ENCODE measurements at regions of chr3 and their contacts with region 1.

Region 1: GRCh38 chr3:99842826-99843589 is 25.3 kb downstream of the CMSS1 start:
- DNase-seq: no peak
- ATAC-seq: peak; percentile 79
- H3K4me3 Mint-ChIP-seq: no peak overlapping the region
- H3K27ac Mint-ChIP-seq: no peak overlapping the region
- H3K4me1 Mint-ChIP-seq: peaks cover 31% of the 10 kb centered on the region
- H3K27me3 Mint-ChIP-seq: no peaks in the 10 kb centered on the region
- CTCF ChIP-seq: 0 out of 2 replicates have a peak, but pooled peaks have one; percentile 36

Region 2: GRCh38 chr3:99862208-99862607 is 19.2 kb after region 1 on chr3:
- CTCF ChIA-PET with region 1: no interaction called
- POLR2A ChIA-PET with region 1: no interaction called
- DNase-seq: no peak
- ATAC-seq: no peak
- H3K4me3 Mint-ChIP-seq: no peak overlapping the region
- H3K27ac Mint-ChIP-seq: no peak overlapping the region
- H3K4me1 Mint-ChIP-seq: peaks cover 20% of the 10 kb centered on the region
- H3K27me3 Mint-ChIP-seq: peaks cover 16% of the 10 kb centered on the region
- CTCF ChIP-seq: no peak

Region 3: DNA sequence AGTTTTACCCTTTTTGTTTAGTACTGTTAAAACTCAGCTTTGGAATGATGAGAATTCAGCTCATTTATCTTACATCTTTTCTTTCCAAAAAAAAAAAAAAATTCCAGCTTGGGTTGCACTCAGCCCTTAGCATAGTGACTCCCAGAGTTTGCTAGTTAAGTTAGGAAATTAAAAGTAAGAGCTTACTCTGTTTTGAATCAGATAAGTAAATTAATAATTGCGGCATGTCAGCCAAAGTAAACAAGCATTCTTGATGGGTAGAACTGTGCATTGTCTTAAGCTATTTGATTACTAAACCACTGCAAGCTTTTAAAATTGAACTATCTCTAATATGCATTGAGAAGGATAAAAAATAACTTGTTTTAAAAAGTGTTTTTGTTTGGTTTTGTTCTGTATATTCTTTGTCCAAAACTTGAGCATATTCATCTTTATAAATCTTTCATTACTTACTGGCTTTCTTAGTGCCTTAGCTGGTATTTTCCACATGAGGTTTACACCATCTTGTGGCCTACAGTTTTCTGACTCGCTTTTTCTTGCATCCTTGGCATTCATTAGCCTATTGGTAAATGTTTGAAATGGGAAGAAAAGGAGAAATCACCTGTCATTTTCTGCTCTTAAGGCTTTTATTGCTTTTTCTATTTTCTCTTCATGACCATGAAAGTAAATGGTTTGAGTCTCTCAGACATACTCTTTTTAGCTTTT is 163.7 kb after region 1 on chr3:
- CTCF ChIA-PET with region 1: interaction called, 15 read pairs
- POLR2A ChIA-PET with region 1: no interaction called
- DNase-seq: no peak
- ATAC-seq: no peak
- H3K4me3 Mint-ChIP-seq: no peak overlapping the region; the same call in 1 of the 2 replicates
- H3K27ac Mint-ChIP-seq: no peak overlapping the region; the same call in 1 of the 2 replicates
- H3K4me1 Mint-ChIP-seq: peaks cover 46% of the 10 kb centered on the region
- H3K27me3 Mint-ChIP-seq: no peaks in the 10 kb centered on the region
- CTCF ChIP-seq: no peak

Region 4: GRCh38 chr3:100089812-100090668 is 247.0 kb after region 1 on chr3:
- CTCF ChIA-PET with region 1: interaction called, 20 read pairs
- POLR2A ChIA-PET with region 1: no interaction called
- DNase-seq: peak; percentile 43
- ATAC-seq: peak; percentile 95
- H3K4me3 Mint-ChIP-seq: no peak overlapping the region
- H3K27ac Mint-ChIP-seq: peak overlapping the region; percentile 36
- H3K4me1 Mint-ChIP-seq: peaks cover 45% of the 10 kb centered on the region
- H3K27me3 Mint-ChIP-seq: no peaks in the 10 kb centered on the region
- CTCF ChIP-seq: no peak; the same call in 1 of the 2 replicates

Region 5: GRCh38 chr3:100260685-100261484 is 417.9 kb after region 1 on chr3 and contains the start of gene TBC1D23:
- CTCF ChIA-PET with region 1: interaction called, 13 read pairs
- POLR2A ChIA-PET with region 1: no interaction called
- DNase-seq: peak; percentile 98
- ATAC-seq: peak; percentile 99
- H3K4me3 Mint-ChIP-seq: peak within 1 kb of the TSS; percentile 95
- H3K27ac Mint-ChIP-seq: peak within 1 kb of the TSS; percentile 99
- H3K4me1 Mint-ChIP-seq: peaks cover 38% of the 10 kb centered on the region
- H3K27me3 Mint-ChIP-seq: no peaks in the 10 kb centered on the region
- CTCF ChIP-seq: no peak
- total RNA-seq, gene TBC1D23: 45.0 to 73.6 TPM (median 46.3 TPM) in 3 replicates